MCF 10A (cell line): ENCODE measurements at regions of chr12 and their contacts with region 1.

Region 1: DNA sequence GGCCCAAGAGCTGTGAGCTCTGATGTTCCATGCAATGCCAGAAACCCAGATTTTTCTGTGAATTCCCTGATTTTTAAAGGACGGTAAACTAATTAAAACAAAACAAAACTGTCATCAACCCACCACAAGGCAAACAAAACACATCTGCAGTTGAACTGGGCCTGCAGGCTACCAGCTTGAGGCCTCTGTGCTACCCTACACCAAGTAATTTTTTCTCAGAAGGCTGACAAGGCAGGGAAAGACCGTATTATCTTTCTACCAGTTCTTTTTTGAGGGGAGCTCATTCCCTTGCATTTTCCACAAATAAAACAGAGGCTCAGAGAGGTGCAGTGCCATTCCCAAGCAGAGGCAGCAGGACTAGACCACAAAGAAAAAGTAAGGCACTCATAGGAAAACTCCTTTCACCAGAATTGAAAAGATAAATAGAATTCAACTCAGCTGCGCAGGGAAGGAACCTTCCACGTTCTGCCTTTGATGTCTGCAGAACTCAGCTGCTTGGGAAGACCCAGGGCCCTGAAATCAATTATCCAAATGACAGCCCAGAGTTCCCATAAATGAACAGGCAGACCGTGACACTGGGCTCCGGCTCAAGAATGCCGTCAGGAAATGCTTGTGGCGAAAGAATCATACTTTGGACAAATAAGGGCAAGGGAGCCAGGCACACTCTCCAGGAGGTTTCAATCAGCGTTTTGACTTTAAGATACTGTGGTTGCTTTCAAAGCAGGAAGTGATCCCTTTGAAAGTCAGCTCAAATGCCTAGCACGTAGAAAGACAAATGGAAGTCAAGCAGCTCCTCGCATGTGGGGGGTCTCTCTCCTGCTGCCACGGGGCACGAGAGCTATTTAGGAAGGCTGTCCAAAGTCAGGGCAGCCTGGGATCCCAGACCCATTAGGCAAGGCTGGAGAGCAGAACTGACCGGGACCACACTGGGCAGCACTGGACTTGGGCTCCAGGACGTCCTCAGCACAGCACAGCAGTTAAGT is 14.1 kb downstream of the KCTD10 start:
- DNase-seq: peak; percentile 91
- H3K4me3 Mint-ChIP-seq: peak overlapping the region; percentile 41
- H3K27ac Mint-ChIP-seq: peak overlapping the region; percentile 97
- H3K4me1 Mint-ChIP-seq: peaks cover 52% of the 10 kb centered on the region
- H3K27me3 Mint-ChIP-seq: no peaks in the 10 kb centered on the region
- CTCF ChIP-seq: no peak

Region 2: DNA sequence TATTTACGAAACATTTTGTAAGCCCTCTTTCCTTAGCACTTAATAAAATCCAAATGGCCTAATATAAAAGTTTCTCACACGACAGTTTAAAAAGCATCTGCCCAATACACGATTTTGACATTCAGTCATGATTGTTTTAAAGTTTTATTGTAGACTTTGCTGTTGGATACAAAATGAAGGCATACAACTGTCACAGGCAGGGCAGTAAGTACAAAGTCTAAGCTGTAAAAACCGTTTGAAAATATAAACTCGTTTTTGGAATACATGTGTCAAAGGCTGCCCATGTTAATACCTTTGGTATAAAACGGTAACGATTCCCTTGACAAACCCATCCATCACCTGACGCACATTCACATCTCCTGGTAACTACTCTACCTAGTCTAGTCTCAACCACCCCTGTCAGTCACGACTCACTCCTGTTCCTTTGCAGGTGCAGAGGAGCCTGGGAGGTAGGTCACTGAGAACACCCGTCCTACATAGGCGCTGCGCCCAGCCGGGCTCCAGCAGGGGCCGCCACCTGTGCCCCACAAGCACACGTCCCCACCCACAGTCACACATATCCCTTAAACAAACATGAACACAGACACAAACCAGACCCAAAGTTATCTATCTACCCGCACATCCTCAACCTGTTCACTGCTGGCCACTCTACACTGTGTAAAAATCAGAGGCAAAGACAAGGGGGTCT is 13.0 kb before region 1 on chr12:
- CTCF ChIA-PET with region 1: interaction called, 3 read pairs
- POLR2A ChIA-PET with region 1: interaction called, 12 read pairs
- intact Hi-C with region 1: no loop called
- DNase-seq: no peak
- H3K4me3 Mint-ChIP-seq: no peak overlapping the region
- H3K27ac Mint-ChIP-seq: no peak overlapping the region
- H3K4me1 Mint-ChIP-seq: no peaks in the 10 kb centered on the region
- H3K27me3 Mint-ChIP-seq: no peaks in the 10 kb centered on the region
- CTCF ChIP-seq: no peak

Region 3: DNA sequence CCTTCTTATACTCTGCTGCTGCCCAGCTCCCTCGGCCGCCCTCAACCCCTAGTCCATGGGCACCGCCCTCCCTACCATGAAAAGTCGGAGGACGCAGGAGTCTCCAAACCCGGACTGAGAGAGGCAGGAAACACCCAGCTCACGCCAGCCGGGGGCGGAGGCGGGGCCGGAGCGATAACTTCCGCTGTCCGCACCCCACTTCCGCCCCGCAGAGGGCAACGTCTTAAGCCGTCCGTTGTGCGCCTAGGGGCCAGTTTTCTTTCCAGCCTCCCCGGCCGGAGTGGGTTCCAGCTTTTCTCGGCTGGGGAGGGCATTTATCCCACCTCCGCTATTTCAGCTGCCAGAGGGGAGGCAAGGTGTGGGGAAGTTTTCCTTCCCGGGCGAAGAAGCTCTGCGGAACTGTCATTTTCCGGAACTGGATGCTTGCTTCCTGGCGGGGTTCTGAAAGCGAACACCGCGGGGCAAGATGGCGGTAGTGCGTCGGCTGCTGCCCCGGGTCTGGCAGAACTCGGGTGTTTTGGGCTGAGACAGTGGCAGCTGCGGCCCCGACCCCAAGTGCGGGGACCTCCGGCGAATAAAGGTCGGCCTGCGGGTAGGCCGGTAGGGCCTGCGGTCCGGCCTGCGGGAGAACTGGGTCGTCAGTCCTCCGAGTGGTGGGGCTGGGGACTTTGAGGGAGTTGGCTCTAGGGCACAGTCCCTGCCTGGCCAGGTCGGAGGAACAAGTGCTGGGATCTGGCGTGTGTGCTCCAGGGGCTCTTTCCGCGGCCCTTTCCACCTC is 14.4 kb after region 1 on chr12 and contains the starts of genes KCTD10 and UBE3B:
- CTCF ChIA-PET with region 1: interaction called, 5 read pairs
- POLR2A ChIA-PET with region 1: interaction called, 130 read pairs
- intact Hi-C with region 1: loop called (anchors 2 kb)
- DNase-seq: peak; percentile 88
- H3K4me3 Mint-ChIP-seq: peak within 1 kb of the TSS; percentile 88
- H3K27ac Mint-ChIP-seq: peak within 1 kb of the TSS; percentile 100
- H3K4me1 Mint-ChIP-seq: peaks cover 3% of the 10 kb centered on the region
- H3K27me3 Mint-ChIP-seq: no peaks in the 10 kb centered on the region
- CTCF ChIP-seq: no peak
- total RNA-seq, gene KCTD10: 44.9 and 45.7 TPM in 2 replicates
- total RNA-seq, gene UBE3B: 38.6 and 40.0 TPM in 2 replicates

Region 4: DNA sequence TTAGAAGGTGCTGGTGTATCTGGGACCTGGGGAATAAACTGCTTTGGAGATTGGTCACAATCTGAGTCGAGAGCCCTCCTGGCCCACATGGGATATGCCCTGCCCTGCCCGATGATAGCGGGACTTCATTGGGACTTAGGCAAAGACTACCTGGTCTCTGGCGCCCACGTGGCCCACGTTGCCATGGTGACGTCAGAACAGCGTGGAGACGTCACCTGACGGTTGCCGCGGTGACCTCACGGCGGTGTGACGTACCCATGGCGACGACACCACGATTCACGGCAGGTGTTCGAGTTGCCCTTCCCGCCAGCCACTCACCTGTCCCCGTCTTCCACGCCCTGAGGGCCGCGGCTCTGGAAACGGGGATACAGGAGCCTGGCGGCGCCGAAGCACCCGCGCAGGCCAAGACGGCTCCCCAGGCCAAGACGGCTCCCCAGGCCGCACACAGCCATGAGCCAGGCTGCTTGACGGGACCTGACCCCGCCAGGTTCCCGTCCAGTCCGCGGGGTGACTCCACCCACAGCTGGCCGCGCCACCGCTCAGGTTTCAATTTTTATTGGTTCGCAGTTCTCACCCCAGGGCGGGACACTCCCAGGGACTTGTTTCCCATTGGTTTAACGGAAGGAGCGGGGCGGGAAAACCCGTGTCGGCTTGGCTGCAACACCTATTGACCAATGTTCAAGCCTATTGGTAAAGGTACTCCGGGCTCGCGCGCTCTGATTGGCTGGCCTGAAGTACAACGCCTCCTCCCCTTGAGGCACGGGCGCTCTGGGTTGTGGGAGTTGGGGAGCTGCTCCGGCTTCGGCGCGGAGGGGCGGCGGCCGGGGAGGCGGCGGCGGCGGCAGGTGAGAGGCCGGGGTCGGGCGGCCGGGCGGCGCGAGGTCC is 110.3 kb after region 1 on chr12 and contains the starts of genes MMAB and MVK:
- CTCF ChIA-PET with region 1: no interaction called
- POLR2A ChIA-PET with region 1: interaction called, 12 read pairs
- intact Hi-C with region 1: no loop called
- DNase-seq: peak; percentile 100
- H3K4me3 Mint-ChIP-seq: peak within 1 kb of the TSS; percentile 92
- H3K27ac Mint-ChIP-seq: peak within 1 kb of the TSS; percentile 97
- H3K4me1 Mint-ChIP-seq: peaks cover 16% of the 10 kb centered on the region
- H3K27me3 Mint-ChIP-seq: no peaks in the 10 kb centered on the region
- CTCF ChIP-seq: no peak
- total RNA-seq, gene MMAB: 36.0 and 59.2 TPM in 2 replicates
- total RNA-seq, gene MVK: 15.5 and 17.1 TPM in 2 replicates